A549 (cell line): ENCODE measurements at regions of chr17 and their contacts with region 1.

Region 1: GRCh38 chr17:49575579-49576087 is at the start of gene NXPH3:
- DNase-seq: peak; percentile 64 to 79
- ATAC-seq: peak; percentile 50 to 78
- H3K4me3 ChIP-seq: peak within 1 kb of the TSS; percentile 53
- H3K27ac ChIP-seq: peak within 1 kb of the TSS; percentile 48 to 73; a peak in 5 of 6 replicates
- H3K4me1 ChIP-seq: peaks cover 4% of the 10 kb centered on the region; the same call in 1 of the 3 replicates
- CTCF ChIP-seq: peak; percentile 96
- EP300 ChIP-seq: no peak
- POLR2A ChIP-seq: no peak
- RAD21 ChIP-seq: peak; percentile 10 to 70; a peak in 3 of 5 replicates
- polyA plus RNA-seq, gene NXPH3: 0.07 and 0.12 TPM in 2 replicates

Region 2: DNA sequence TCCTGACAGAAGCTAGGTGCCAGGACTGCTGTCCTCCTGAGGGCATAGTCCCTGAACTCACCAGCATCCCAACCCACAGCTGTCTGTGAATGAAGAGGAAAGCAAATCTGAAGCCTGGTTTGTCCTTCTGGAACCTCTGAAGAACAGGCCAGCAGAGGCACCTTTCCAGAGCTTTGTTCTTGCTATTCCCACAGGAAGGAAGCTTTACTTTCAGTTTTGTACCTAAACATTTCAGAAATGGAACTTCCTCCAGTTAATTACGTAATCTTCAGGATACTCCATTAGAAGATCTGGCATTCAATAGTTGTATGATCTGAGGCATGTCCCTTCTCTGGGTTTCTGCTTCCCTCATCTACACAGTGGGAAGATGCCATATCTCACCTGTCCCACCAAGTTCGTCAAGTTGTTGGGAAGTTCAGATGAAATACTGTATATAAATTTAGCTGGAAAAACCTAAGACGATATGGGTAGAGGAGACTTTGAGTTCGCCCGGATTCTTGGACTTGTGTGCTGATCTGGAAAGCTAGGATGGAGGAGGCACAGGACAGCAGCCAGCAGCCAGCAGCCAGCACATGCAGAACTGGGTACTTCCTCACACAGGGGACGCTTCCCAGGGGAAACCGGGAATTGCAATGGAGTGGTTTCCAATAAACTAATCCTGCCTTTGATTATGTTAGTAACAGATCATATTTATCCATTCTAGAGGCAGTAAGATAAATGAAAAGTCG is 22.5 kb after region 1 on chr17:
- CTCF ChIA-PET with region 1: interaction called, 21 read pairs
- POLR2A ChIA-PET with region 1: no interaction called
- DNase-seq: no peak
- ATAC-seq: no peak
- H3K4me3 ChIP-seq: no peak overlapping the region
- H3K27ac ChIP-seq: no peak overlapping the region
- H3K4me1 ChIP-seq: no peaks in the 10 kb centered on the region
- CTCF ChIP-seq: no peak
- EP300 ChIP-seq: no peak
- POLR2A ChIP-seq: no peak
- RAD21 ChIP-seq: no peak

Region 3: GRCh38 chr17:49603720-49604119 is 28.1 kb after region 1 on chr17:
- CTCF ChIA-PET with region 1: interaction called, 20 read pairs
- POLR2A ChIA-PET with region 1: no interaction called
- DNase-seq: no peak
- ATAC-seq: peak; percentile 64 to 78
- H3K4me3 ChIP-seq: no peak overlapping the region
- H3K27ac ChIP-seq: no peak overlapping the region
- H3K4me1 ChIP-seq: no peaks in the 10 kb centered on the region
- CTCF ChIP-seq: no peak
- EP300 ChIP-seq: no peak
- POLR2A ChIP-seq: no peak
- RAD21 ChIP-seq: no peak

Region 4: DNA sequence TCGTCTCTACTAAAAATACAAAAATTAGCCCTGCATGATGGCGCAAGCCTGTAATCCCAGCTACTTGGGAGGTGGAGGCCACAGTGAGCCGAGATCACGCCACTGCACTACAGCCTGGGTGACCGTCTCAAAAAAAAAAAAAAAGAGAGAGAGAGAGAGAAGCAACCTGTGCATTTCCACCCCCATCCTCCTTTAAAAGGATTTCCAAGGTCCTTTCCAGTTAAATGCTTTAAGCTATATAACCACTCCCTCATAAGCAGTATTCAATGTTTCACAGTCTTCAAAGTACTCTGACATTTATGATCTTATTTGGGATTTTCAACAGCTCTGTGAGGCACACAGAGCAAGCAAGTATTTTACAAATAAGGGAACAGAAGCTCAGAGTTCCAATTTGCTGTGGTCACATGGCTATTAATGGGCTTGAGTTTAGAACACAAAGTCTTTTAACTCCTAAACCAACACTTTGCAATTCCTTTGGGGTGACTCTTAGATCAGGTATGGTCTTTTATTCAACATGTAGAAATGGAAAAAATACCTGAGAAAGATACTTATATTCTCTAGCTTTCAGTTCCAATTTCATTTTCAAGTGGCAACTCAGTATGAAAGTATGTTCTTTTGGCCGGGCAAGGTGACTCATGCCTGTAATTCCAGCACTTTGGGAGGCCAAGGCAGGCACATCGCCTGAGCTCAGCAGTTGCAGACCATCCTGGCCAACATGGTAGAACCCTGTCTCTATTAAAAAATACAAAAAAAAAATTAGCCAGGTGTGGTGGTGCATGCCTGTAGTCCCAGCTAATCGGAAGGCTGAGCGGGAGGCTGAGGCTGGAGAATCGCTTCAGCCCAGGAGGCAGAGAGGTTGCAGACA is 71.0 kb after region 1 on chr17:
- CTCF ChIA-PET with region 1: interaction called, 13 read pairs
- POLR2A ChIA-PET with region 1: interaction called, 4 read pairs
- DNase-seq: peak in 1 of 2 experiments; percentile 27
- ATAC-seq: peak; percentile 80 to 92
- H3K4me3 ChIP-seq: no peak overlapping the region
- H3K27ac ChIP-seq: peak overlapping the region; percentile 32 to 53; a peak in 4 of 6 replicates
- H3K4me1 ChIP-seq: peaks cover 24% of the 10 kb centered on the region
- CTCF ChIP-seq: no peak
- EP300 ChIP-seq: no peak
- POLR2A ChIP-seq: no peak
- RAD21 ChIP-seq: no peak